Naive thymus-derived CD4-positive, alpha-beta T cell (primary cell): ENCODE measurements at regions of chr11 and their contacts with region 1.

Region 1: GRCh38 chr11:121451986-121452608 is at the start of gene SORL1:
- DNase-seq: peak; percentile 58 to 75 (median 72)
- ATAC-seq: peak; percentile 74
- H3K4me3 ChIP-seq: peak within 1 kb of the TSS; percentile 80
- H3K4me3 Mint-ChIP-seq: peak within 1 kb of the TSS; percentile 90 to 99 (median 98)
- H3K27ac ChIP-seq: peak within 1 kb of the TSS; percentile 83
- H3K27ac Mint-ChIP-seq: peak within 1 kb of the TSS; percentile 90 to 100 (median 96)
- H3K4me1 ChIP-seq: peaks cover 50 to 73% of the 10 kb centered on the region in 2 donors
- H3K4me1 Mint-ChIP-seq: peaks cover 69 to 87% (median 81%) of the 10 kb centered on the region in 7 donors
- H3K27me3 ChIP-seq: no peaks in the 10 kb centered on the region
- H3K27me3 Mint-ChIP-seq: no peaks in the 10 kb centered on the region
- total RNA-seq, gene SORL1: 179 to 555 (median 375) TPM

Region 2: GRCh38 chr11:121328967-121329679 is 123.0 kb before region 1 on chr11:
- CTCF ChIA-PET with region 1: interaction called, 5 read pairs
- POLR2A ChIA-PET with region 1: interaction called, 107 read pairs
- intact Hi-C with region 1: loop called (anchors 1 to 2 kb)
- DNase-seq: peak in 4 of 9 donors; percentile 5 to 18 (median 8)
- ATAC-seq: peak; percentile 54
- H3K4me3 ChIP-seq: no peak overlapping the region
- H3K4me3 Mint-ChIP-seq: no peak overlapping the region
- H3K27ac ChIP-seq: no peak overlapping the region
- H3K27ac Mint-ChIP-seq: no peak overlapping the region
- H3K4me1 ChIP-seq: peaks cover 19 to 26% of the 10 kb centered on the region in 2 donors
- H3K4me1 Mint-ChIP-seq: peaks cover 3 to 20% (median 9%) of the 10 kb centered on the region in 7 donors
- H3K27me3 ChIP-seq: no peaks in the 10 kb centered on the region
- H3K27me3 Mint-ChIP-seq: peaks cover 0 to 2% (median 0%) of the 10 kb centered on the region in 5 donors

Region 3: GRCh38 chr11:121372671-121373429 is 79.2 kb before region 1 on chr11:
- CTCF ChIA-PET with region 1: interaction called, 7 read pairs
- POLR2A ChIA-PET with region 1: interaction called, 52 read pairs
- intact Hi-C with region 1: loop called in 1 of 2 experiments (anchors 2 kb)
- DNase-seq: peak in 5 of 9 donors; percentile 19 to 34 (median 23)
- ATAC-seq: peak; percentile 56
- H3K4me3 ChIP-seq: peak overlapping the region; percentile 1
- H3K4me3 Mint-ChIP-seq: peak overlapping the region; percentile 34 to 83 (median 68)
- H3K27ac ChIP-seq: peak overlapping the region; percentile 4
- H3K27ac Mint-ChIP-seq: peak overlapping the region; percentile 72 to 92 (median 83)
- H3K4me1 ChIP-seq: peaks cover 7 to 59% of the 10 kb centered on the region in 2 donors
- H3K4me1 Mint-ChIP-seq: peaks cover 35 to 99% (median 79%) of the 10 kb centered on the region in 7 donors
- H3K27me3 ChIP-seq: no peaks in the 10 kb centered on the region
- H3K27me3 Mint-ChIP-seq: no peaks in the 10 kb centered on the region

Region 4: DNA sequence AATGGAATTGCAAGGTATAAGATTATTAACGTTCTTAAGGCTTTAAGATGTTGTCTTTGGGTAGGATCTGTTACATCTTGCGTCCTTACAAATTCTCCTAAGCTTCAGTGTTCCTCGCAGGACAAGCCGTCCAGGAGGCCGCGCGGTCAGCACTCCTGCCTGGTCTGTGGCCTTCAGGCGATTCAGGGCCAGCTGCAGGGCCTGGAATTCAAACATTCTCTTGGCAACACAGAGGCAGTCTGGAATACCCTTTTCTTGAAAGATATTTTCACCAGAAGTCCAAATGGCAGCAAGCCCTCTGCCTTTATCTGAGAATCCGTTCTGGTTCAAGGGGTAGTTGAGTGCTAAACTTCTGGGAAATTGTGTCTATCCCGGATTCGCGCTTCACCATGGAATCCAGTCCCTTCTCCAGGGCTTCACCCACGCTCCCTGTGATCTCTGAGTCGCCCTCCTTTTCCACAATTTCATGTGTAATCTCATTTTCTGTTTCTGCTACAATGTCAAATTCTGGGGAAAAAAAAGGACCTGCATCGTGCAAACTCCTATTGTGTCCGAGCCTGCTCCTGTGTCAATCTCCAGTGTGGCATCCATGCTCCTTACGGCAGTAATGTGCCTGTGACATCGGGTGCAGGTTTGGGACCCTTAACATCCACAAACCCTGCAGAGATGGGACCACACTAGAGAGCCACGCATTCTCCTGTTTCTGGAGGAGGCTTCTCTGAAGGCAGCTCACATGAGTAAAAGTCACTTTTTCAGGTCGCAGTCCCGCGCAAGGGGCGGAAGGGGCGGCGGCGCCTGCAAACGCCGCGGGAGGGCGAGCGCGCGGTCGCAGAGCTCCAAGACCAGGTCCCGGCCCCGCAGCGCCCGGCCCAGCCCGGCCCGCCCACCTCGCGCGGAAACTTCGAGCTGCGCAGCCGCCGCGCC is 25.4 kb before region 1 on chr11:
- CTCF ChIA-PET with region 1: interaction called, 4 read pairs
- POLR2A ChIA-PET with region 1: interaction called, 321 read pairs
- intact Hi-C with region 1: loop called (anchors 1 kb)
- DNase-seq: peak in 6 of 9 donors; percentile 30 to 56 (median 36)
- ATAC-seq: peak; percentile 79
- H3K4me3 ChIP-seq: peak overlapping the region; percentile 44
- H3K4me3 Mint-ChIP-seq: peak overlapping the region; percentile 67 to 86 (median 78)
- H3K27ac ChIP-seq: peak overlapping the region; percentile 37
- H3K27ac Mint-ChIP-seq: peak overlapping the region; percentile 5 to 89 (median 43)
- H3K4me1 ChIP-seq: peaks cover 0 to 27% of the 10 kb centered on the region in 2 donors
- H3K4me1 Mint-ChIP-seq: peaks cover 34 to 70% (median 54%) of the 10 kb centered on the region in 7 donors
- H3K27me3 ChIP-seq: no peaks in the 10 kb centered on the region
- H3K27me3 Mint-ChIP-seq: peaks cover 0 to 3% (median 0%) of the 10 kb centered on the region in 5 donors

Region 5: GRCh38 chr11:121482231-121483129 is 30.4 kb after region 1 on chr11:
- CTCF ChIA-PET with region 1: interaction called, 6 read pairs
- POLR2A ChIA-PET with region 1: interaction called, 77 read pairs
- intact Hi-C with region 1: loop called (anchors 1 kb)
- DNase-seq: peak in 8 of 9 donors; percentile 45 to 72 (median 67)
- ATAC-seq: peak; percentile 87
- H3K4me3 ChIP-seq: peak overlapping the region; percentile 30
- H3K4me3 Mint-ChIP-seq: peak overlapping the region; percentile 73 to 89 (median 86)
- H3K27ac ChIP-seq: peak overlapping the region; percentile 61
- H3K27ac Mint-ChIP-seq: peak overlapping the region; percentile 84 to 97 (median 94)
- H3K4me1 ChIP-seq: peaks cover 25 to 44% of the 10 kb centered on the region in 2 donors
- H3K4me1 Mint-ChIP-seq: peaks cover 50 to 90% (median 81%) of the 10 kb centered on the region in 7 donors
- H3K27me3 ChIP-seq: no peaks in the 10 kb centered on the region
- H3K27me3 Mint-ChIP-seq: no peaks in the 10 kb centered on the region

Region 6: DNA sequence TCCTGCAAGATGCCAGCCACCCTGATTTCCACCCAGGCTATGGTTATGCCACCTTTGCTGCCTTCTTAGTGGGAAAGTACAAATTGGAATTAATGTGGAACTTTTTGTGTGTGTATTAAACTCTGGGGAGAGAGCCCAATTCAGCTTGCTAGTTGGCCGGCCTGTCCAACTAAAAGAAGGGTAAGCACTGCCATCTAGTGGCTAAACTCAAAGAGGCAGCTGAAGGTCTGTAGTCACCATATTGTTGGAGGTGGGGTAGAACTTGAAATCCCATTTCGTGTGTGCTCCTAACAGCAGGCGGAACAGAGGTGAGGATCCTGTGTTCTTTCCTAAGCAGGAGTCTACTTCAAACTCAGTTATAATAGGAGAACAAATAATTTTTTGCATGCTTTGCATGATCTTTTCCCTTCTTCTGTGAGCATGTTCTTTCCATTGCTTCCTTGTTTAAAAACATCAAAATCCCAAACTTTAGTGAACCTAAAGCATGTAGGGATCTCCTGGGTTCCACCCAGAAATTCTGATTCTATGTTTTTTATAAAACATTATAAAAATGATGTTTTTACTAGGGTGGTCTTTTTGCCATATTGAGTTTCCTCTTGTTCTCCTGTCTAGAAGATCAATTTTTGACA is 139.4 kb after region 1 on chr11:
- CTCF ChIA-PET with region 1: no interaction called
- POLR2A ChIA-PET with region 1: interaction called, 4 read pairs
- intact Hi-C with region 1: loop called (anchors 1 kb)
- DNase-seq: peak in 8 of 9 donors; percentile 56 to 81 (median 74)
- ATAC-seq: peak; percentile 88
- H3K4me3 ChIP-seq: no peak overlapping the region
- H3K4me3 Mint-ChIP-seq: no peak overlapping the region
- H3K27ac ChIP-seq: no peak overlapping the region
- H3K27ac Mint-ChIP-seq: peak overlapping the region in 7 of 9 donors; percentile 44 to 89 (median 70)
- H3K4me1 ChIP-seq: no peaks in the 10 kb centered on the region
- H3K4me1 Mint-ChIP-seq: peaks cover 9 to 29% (median 14%) of the 10 kb centered on the region in 7 donors
- H3K27me3 ChIP-seq: no peaks in the 10 kb centered on the region
- H3K27me3 Mint-ChIP-seq: no peaks in the 10 kb centered on the region